WTC11 (cell line): ENCODE measurements at regions of chr6 and their contacts with region 1.

Region 1: DNA sequence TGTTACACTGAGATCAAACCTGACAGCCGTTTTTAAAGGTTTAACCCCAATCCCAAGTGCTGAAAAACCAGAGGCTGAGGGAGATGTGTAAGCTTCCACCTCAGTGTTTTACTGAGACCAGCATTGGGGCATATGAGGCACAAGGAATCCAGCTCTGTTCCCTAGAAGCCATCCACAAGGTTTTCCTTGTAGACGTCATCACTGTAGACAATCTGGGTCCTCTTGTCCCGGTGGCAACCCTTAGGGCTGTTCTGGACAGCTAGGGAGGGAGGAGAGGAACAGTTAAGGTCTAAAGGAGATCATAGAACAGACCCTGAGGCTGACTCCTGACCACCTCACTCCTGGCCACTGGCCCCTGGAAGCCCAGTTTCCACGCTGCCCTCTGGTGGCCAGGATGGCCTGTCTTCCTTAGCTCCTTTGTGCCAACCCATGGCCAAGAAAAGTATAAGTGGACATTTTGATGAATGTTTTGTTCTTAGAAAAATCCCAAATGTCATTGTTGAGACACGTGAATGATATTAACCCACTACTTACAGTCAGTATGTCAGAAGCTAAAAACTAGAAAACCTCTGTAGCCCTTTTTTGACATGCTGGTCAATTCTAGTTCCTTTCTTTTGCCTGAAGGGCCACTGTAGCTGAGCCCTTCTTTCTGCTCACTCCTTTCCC is 6.4 kb downstream of the CFB start:
- DNase-seq: peak; percentile 70
- ATAC-seq: peak; percentile 87
- H3K4me3 Mint-ChIP-seq: no peak overlapping the region
- H3K27ac Mint-ChIP-seq: no peak overlapping the region; the same call in 1 of the 2 replicates
- H3K4me1 Mint-ChIP-seq: no peaks in the 10 kb centered on the region
- H3K27me3 Mint-ChIP-seq: peaks cover 18% of the 10 kb centered on the region
- CTCF ChIP-seq: peak; percentile 31

Region 2: DNA sequence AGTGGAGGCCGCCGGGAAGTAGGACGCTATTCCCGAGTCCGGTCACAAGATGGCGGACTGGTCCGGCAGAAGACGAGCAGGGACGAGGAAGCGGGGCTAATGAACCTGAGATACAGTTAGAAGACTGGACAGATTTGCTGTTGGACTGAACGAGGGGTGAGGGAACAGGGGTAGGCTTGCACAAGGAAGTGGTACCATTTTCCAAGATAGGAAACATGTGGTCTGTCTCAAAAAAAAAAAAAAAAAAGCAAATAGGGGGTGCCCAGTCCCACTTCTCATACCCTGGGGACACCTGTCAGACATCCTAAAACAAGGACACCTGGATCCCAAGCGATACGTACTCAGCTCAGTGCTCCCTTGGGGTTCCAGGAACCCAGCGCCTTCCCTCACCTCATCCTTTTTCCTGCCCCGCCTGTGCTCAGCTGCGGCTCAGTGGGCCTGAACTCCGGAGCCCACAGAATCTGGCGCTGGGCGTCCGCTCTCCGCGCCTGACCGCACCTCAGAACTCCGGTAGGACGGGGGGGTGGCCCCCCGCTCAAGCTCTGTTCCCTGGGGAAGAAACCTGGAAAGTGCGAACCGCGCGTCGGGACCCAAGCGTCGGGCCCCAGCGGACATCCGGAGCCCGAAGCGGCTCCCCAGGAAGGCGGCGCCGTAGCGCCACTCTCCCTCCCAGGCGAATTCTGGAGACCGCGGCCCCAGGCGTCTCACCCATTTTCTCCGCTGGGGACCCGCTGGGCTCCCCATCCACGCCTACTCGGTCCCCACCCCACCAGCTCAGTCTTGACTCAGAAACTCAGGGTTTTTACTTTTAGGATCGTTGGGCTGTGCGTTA is 271.2 kb before region 1 on chr6 and contains the start of gene LY6G5C:
- CTCF ChIA-PET with region 1: interaction called, 11 read pairs
- POLR2A ChIA-PET with region 1: no interaction called
- DNase-seq: peak; percentile 77
- ATAC-seq: peak; percentile 39
- H3K4me3 Mint-ChIP-seq: peak within 1 kb of the TSS; percentile 89
- H3K27ac Mint-ChIP-seq: no peak within 1 kb of the TSS
- H3K4me1 Mint-ChIP-seq: peaks cover 16% of the 10 kb centered on the region
- H3K27me3 Mint-ChIP-seq: peaks cover 24% of the 10 kb centered on the region
- CTCF ChIP-seq: peak; percentile 6; the same call in 1 of the 2 replicates
- total RNA-seq, gene LY6G5C: 0.98 to 1.6 TPM (median 1.0 TPM) in 3 replicates

Region 3: GRCh38 chr6:31901953-31902643 is 50.2 kb before region 1 on chr6 and contains the start of gene ZBTB12:
- CTCF ChIA-PET with region 1: interaction called, 21 read pairs
- POLR2A ChIA-PET with region 1: interaction called, 3 read pairs
- DNase-seq: peak; percentile 96
- ATAC-seq: peak; percentile 57
- H3K4me3 Mint-ChIP-seq: peak within 1 kb of the TSS; percentile 80
- H3K27ac Mint-ChIP-seq: peak within 1 kb of the TSS; percentile 96
- H3K4me1 Mint-ChIP-seq: peaks cover 25% of the 10 kb centered on the region
- H3K27me3 Mint-ChIP-seq: peaks cover 5% of the 10 kb centered on the region
- CTCF ChIP-seq: no peak
- total RNA-seq, gene ZBTB12: 24.0 to 46.2 TPM (median 44.1 TPM) in 3 replicates

Region 4: DNA sequence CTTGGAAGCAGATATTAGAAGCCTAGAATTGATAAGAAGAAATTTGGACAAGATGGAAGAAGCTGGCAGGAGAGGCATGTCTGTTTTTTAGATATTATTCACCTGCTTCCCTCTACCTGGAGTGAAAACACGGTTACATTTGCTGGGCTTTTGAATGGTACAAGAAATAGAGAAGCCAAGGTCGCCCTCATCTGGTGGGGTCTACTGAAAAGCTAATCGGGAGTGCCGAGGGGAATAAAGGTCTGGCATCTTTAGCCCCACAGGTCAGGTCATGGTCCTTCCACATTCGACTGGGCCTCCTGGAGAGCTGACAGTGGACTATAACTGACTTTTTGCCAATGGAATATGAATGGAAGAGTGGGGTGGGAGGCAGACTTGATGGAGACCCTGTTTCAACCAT is 29.3 kb before region 1 on chr6:
- CTCF ChIA-PET with region 1: interaction called, 16 read pairs
- POLR2A ChIA-PET with region 1: no interaction called
- DNase-seq: peak; percentile 50
- ATAC-seq: peak; percentile 87
- H3K4me3 Mint-ChIP-seq: no peak overlapping the region
- H3K27ac Mint-ChIP-seq: no peak overlapping the region
- H3K4me1 Mint-ChIP-seq: no peaks in the 10 kb centered on the region
- H3K27me3 Mint-ChIP-seq: peaks cover 15% of the 10 kb centered on the region
- CTCF ChIP-seq: no peak

Region 5: GRCh38 chr6:31971993-31972708 is 19.9 kb after region 1 on chr6 and contains the start of gene DXO:
- CTCF ChIA-PET with region 1: interaction called, 14 read pairs
- POLR2A ChIA-PET with region 1: no interaction called
- DNase-seq: peak; percentile 93
- ATAC-seq: peak; percentile 88
- H3K4me3 Mint-ChIP-seq: peak within 1 kb of the TSS; percentile 84
- H3K27ac Mint-ChIP-seq: peak within 1 kb of the TSS; percentile 99
- H3K4me1 Mint-ChIP-seq: peaks cover 12% of the 10 kb centered on the region
- H3K27me3 Mint-ChIP-seq: no peaks in the 10 kb centered on the region
- CTCF ChIP-seq: no peak
- total RNA-seq, gene DXO: 13.8 to 16.5 TPM (median 15.7 TPM) in 3 replicates